ENCODE measurements at regions of chr19 and their contacts with region 1.

Region 1: DNA sequence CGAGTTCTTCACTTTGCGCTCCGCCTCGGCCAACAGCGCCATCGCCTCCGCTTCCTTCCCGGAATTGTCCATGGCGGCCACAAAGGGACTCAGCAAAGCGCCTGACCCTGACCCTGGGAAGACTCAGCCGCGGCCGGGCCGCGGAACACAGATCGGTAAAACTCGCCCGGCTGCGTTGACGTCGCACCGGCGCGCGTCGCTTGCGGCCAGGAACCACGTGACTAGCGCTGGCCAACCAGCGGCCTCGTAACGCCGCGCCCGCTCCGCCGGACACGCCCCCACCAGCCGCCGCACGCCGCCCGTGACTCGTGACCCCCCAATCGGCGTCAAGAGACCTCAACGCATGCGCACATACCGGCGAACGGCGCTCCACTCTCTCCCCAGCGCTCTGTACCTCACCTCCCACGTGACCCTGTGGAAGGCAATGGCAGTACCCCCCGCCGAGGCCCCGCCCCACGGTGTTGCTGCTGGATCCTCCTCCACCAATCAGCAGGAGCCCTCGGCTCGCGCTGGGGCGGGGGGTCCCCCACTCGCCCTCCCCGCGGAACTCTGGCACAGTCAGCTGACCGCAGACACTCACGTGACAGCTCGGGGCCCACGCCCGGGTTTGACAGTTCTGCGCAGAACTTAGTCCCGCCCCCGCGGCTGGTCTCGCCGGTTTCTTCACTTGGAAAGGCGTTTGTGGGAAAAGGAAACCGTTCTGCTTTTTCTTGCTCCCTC is at the start of gene NAPA:
- DNase-seq: peak; percentile 100
- H3K4me3 ChIP-seq: peak within 1 kb of the TSS; percentile 83
- H3K4me3 Mint-ChIP-seq: peak within 1 kb of the TSS; percentile 100
- H3K27ac Mint-ChIP-seq: peak within 1 kb of the TSS; percentile 87
- H3K4me1 ChIP-seq: peaks cover 25% of the 10 kb centered on the region
- H3K4me1 Mint-ChIP-seq: peaks cover 34% of the 10 kb centered on the region
- H3K27me3 ChIP-seq: no peaks in the 10 kb centered on the region
- H3K27me3 Mint-ChIP-seq: no peaks in the 10 kb centered on the region
- CTCF ChIP-seq: no peak
- total RNA-seq, gene NAPA: 149 TPM in 2 replicates

Region 2: DNA sequence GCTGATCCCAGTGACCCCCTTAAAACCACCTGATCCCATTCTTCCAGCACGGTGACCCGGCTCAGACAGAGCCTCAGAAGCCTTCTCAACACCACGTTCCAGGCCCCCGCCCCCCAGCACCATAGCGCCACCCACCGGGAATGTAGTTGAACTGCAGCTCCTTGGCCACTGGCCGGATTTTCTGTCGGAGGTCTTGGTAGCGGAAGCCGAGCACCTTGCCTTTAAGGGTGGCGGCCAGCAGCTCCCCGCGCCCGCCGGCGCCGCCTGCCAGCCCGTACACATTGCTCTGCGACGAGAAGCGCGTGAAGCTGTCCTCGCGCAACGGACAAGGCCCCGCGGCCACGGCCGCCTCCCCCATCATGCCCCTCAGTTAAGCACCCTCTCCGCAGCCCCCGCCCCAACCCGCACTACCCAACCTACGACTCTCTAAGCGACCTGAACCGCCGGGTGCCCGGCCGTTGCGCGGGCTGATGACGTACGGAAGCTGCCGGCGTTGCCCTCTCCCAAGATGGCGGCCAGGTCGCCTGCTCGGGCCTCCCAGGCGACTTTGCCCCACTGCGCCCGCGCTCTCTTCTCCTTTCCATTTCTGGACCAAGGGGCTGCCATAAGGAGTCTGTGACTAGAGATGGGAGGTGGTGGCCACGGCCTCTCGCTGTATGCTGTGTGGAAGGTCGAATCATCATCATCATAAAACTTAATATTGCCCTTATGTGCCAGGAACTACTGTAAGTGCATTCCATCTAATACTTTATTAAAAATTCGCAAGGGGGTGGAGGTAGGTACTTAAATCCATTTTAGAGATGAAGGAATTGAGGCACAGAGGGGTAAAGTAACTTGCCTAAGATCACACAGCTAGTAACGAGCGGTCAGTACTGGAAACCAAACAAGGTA is 31.0 kb before region 1 on chr19 and contains the start of gene KPTN:
- CTCF ChIA-PET with region 1: interaction called, 14 read pairs
- POLR2A ChIA-PET with region 1: interaction called, 3 read pairs
- intact Hi-C with region 1: no loop called
- DNase-seq: peak; percentile 94 to 95
- H3K4me3 ChIP-seq: peak within 1 kb of the TSS; percentile 95
- H3K4me3 Mint-ChIP-seq: peak within 1 kb of the TSS; percentile 91
- H3K27ac Mint-ChIP-seq: peak within 1 kb of the TSS; percentile 99
- H3K4me1 ChIP-seq: no peaks in the 10 kb centered on the region
- H3K4me1 Mint-ChIP-seq: no peaks in the 10 kb centered on the region
- H3K27me3 ChIP-seq: no peaks in the 10 kb centered on the region
- H3K27me3 Mint-ChIP-seq: no peaks in the 10 kb centered on the region
- CTCF ChIP-seq: peak; percentile 97 to 98
- total RNA-seq, gene KPTN: 19.7 and 20.6 TPM in 2 replicates

Region 3: DNA sequence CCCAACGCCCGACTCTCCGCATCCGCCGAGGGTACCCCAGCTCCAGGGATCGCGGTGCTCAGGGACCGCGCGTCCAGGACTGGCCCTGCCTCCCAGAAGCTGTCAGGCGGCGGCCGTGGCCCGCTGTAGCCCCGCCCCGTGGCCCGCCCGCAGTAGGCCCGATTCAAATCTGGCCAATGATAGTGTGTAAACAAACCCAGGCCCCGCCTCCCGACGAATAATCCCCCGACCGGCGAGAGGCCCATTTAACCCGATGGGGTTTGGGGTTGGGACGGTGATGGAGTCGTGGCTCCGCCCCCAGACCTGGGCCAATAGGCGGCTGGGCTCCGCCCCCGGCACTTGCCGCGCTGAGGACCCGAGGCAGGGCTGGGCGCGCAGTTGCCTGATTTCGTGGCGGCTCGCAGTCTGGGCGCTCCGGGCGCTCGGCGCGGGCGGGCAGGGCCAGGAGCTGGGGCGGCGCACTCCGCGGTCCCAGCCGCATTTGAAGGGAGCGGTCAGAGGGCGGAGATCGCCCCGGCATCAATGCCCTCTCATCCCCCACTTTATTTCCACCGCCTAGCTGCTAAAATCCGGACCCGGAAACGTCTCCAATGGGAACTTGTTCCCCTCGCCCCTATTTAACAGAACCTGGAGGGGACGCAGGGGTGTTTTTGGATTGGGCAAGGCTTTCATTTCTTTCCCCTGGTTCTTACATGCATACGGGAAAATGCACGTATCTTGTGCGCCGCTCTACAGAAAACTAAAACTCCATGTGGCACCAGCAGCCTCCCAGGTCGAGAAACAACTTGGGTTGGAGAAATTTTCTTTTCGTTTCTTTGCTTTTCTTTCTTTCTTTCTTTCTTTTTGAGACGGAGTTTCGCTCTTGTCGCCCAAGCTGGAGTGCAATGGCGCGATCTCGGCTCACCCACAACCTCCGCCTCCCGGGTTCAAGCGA is 85.5 kb after region 1 on chr19:
- CTCF ChIA-PET with region 1: interaction called, 4 read pairs
- POLR2A ChIA-PET with region 1: no interaction called
- intact Hi-C with region 1: loop called (anchors 1 kb)
- DNase-seq: peak; percentile 100
- H3K4me3 ChIP-seq: peak overlapping the region; percentile 46
- H3K4me3 Mint-ChIP-seq: peak overlapping the region; percentile 77
- H3K27ac Mint-ChIP-seq: peak overlapping the region; percentile 87
- H3K4me1 ChIP-seq: peaks cover 24% of the 10 kb centered on the region
- H3K4me1 Mint-ChIP-seq: peaks cover 21% of the 10 kb centered on the region
- H3K27me3 ChIP-seq: no peaks in the 10 kb centered on the region
- H3K27me3 Mint-ChIP-seq: no peaks in the 10 kb centered on the region
- CTCF ChIP-seq: no peak

Region 4: DNA sequence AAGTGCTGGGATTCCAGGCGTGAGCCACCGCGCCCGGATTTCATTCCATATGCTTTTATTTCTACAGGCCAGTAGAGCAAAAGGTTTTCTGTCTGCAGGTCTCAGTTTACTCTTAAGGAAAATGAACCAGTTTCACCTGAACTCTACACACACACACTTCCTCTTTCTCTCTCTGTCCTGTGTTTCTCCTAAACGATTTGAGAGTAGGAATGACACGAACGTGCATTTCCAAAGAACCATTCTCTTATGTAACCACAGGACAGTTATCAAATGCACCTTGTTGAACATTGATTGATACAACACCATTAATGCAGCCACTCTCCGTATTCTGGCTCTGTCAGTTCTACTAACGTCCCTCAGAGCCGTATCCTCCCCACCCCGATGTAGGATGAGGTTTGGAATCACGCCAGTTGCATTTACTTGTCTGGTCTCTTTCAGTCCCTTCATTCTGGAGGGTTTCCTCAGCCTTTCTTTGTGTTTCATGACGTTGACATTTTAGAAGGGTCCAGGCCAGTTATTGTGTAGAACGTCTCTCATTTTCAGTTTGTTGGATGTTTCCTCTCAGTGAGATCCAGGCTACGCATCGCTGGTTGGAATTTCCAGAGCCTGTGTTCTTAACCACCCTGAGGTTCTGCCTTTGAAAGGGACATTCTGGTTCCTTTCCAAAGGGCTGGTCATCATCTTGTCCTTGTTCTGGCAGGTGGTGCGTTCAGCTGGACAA is 129.9 kb after region 1 on chr19:
- CTCF ChIA-PET with region 1: interaction called, 7 read pairs
- POLR2A ChIA-PET with region 1: interaction called, 3 read pairs
- intact Hi-C with region 1: loop called (anchors 1 kb)
- DNase-seq: no peak
- H3K4me3 ChIP-seq: no peak overlapping the region
- H3K4me3 Mint-ChIP-seq: peak overlapping the region; percentile 41
- H3K27ac Mint-ChIP-seq: peak overlapping the region; percentile 99
- H3K4me1 ChIP-seq: peaks cover 57% of the 10 kb centered on the region
- H3K4me1 Mint-ChIP-seq: peaks cover 39% of the 10 kb centered on the region
- H3K27me3 ChIP-seq: no peaks in the 10 kb centered on the region
- H3K27me3 Mint-ChIP-seq: no peaks in the 10 kb centered on the region
- CTCF ChIP-seq: no peak

Region 5: GRCh38 chr19:47697863-47698609 is 183.0 kb after region 1 on chr19:
- CTCF ChIA-PET with region 1: no interaction called
- POLR2A ChIA-PET with region 1: no interaction called
- intact Hi-C with region 1: loop called (anchors 1 kb)
- DNase-seq: peak; percentile 84 to 87
- H3K4me3 ChIP-seq: no peak overlapping the region
- H3K4me3 Mint-ChIP-seq: no peak overlapping the region
- H3K27ac Mint-ChIP-seq: peak overlapping the region; percentile 56
- H3K4me1 ChIP-seq: peaks cover 6% of the 10 kb centered on the region
- H3K4me1 Mint-ChIP-seq: no peaks in the 10 kb centered on the region
- H3K27me3 ChIP-seq: no peaks in the 10 kb centered on the region
- H3K27me3 Mint-ChIP-seq: no peaks in the 10 kb centered on the region
- CTCF ChIP-seq: peak; percentile 99

Measured in Caco-2 (cell line).